PC-3 (cell line): ENCODE measurements at regions of chr13 and their contacts with region 1.

Region 1: GRCh38 chr13:36912973-36913372 is 7.1 kb downstream of the SMAD9 start:
- DNase-seq: no peak
- ATAC-seq: no peak; the same call in 1 of the 2 replicates
- H3K4me3 ChIP-seq: no peak overlapping the region
- H3K27ac ChIP-seq: peak overlapping the region; percentile 64
- H3K4me1 ChIP-seq: peaks cover 4% of the 10 kb centered on the region; the same call in 1 of the 2 replicates
- H3K27me3 ChIP-seq: no peaks in the 10 kb centered on the region
- CTCF ChIP-seq: no peak

Region 2: DNA sequence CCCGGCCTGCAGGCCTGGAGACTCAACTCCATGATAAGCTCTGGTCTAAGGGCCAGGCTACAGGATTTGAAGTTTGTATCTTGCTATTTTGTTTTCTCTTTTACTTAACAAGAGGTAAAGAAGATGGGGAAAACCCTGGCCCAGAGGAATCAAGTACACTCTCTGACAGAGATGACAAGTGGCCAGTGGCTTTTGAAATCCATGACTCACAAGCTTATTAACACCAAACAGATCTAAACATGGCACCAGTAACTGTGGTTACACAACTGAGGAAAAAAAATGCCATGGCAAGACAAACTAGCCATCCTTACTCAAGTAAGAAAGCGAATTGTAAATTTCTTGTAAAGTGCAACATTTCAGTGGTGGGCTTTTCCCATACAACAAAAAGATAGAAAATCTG is 311.8 kb before region 1 on chr13:
- CTCF ChIA-PET with region 1: no interaction called
- POLR2A ChIA-PET with region 1: no interaction called
- intact Hi-C with region 1: no loop called
- DNase-seq: no peak
- ATAC-seq: no peak
- H3K4me3 ChIP-seq: no peak overlapping the region
- H3K27ac ChIP-seq: no peak overlapping the region
- H3K4me1 ChIP-seq: no peaks in the 10 kb centered on the region
- H3K27me3 ChIP-seq: no peaks in the 10 kb centered on the region
- CTCF ChIP-seq: no peak

Region 3: GRCh38 chr13:36858290-36858689 is 54.7 kb before region 1 on chr13:
- CTCF ChIA-PET with region 1: no interaction called
- POLR2A ChIA-PET with region 1: no interaction called
- intact Hi-C with region 1: loop called (anchors 5 kb)
- DNase-seq: peak; percentile 73
- ATAC-seq: peak; percentile 94
- H3K4me3 ChIP-seq: no peak overlapping the region
- H3K27ac ChIP-seq: no peak overlapping the region
- H3K4me1 ChIP-seq: peaks cover 8% of the 10 kb centered on the region
- H3K27me3 ChIP-seq: no peaks in the 10 kb centered on the region
- CTCF ChIP-seq: peak; percentile 57

Region 4: GRCh38 chr13:36870050-36870692 is 42.8 kb before region 1 on chr13:
- CTCF ChIA-PET with region 1: no interaction called
- POLR2A ChIA-PET with region 1: no interaction called
- intact Hi-C with region 1: loop called (anchors 2 kb)
- DNase-seq: peak; percentile 13
- ATAC-seq: peak; percentile 36
- H3K4me3 ChIP-seq: no peak overlapping the region
- H3K27ac ChIP-seq: peak overlapping the region; percentile 60
- H3K4me1 ChIP-seq: peaks cover 16% of the 10 kb centered on the region
- H3K27me3 ChIP-seq: no peaks in the 10 kb centered on the region
- CTCF ChIP-seq: no peak

Region 5: GRCh38 chr13:36981156-36981743 is 68.3 kb after region 1 on chr13:
- CTCF ChIA-PET with region 1: no interaction called
- POLR2A ChIA-PET with region 1: no interaction called
- intact Hi-C with region 1: loop called (anchors 5 kb)
- DNase-seq: peak; percentile 62
- ATAC-seq: peak; percentile 35
- H3K4me3 ChIP-seq: no peak overlapping the region
- H3K27ac ChIP-seq: no peak overlapping the region
- H3K4me1 ChIP-seq: no peaks in the 10 kb centered on the region
- H3K27me3 ChIP-seq: no peaks in the 10 kb centered on the region
- CTCF ChIP-seq: peak; percentile 67

Region 6: GRCh38 chr13:37097076-37097475 is 184.1 kb after region 1 on chr13:
- CTCF ChIA-PET with region 1: no interaction called
- POLR2A ChIA-PET with region 1: no interaction called
- intact Hi-C with region 1: no loop called
- DNase-seq: no peak
- ATAC-seq: no peak
- H3K4me3 ChIP-seq: no peak overlapping the region
- H3K27ac ChIP-seq: no peak overlapping the region
- H3K4me1 ChIP-seq: no peaks in the 10 kb centered on the region
- H3K27me3 ChIP-seq: peaks cover 52% of the 10 kb centered on the region
- CTCF ChIP-seq: no peak